SK-N-SH (cell line): ENCODE measurements at regions of chr3 and their contacts with region 1.

Region 1: GRCh38 chr3:168615493-168616020 is 519.8 kb upstream of the GOLIM4 start:
- DNase-seq: no peak
- H3K4me3 ChIP-seq: no peak overlapping the region
- H3K27ac ChIP-seq: no peak overlapping the region
- H3K4me1 ChIP-seq: no peaks in the 10 kb centered on the region
- H3K27me3 ChIP-seq: no peaks in the 10 kb centered on the region
- CTCF ChIP-seq: no peak
- EP300 ChIP-seq: no peak
- RAD21 ChIP-seq: no peak

Region 2: GRCh38 chr3:168511428-168512014 is 104.0 kb before region 1 on chr3:
- CTCF ChIA-PET with region 1: interaction called, 61 read pairs
- POLR2A ChIA-PET with region 1: no interaction called
- DNase-seq: peak; percentile 12
- H3K4me3 ChIP-seq: no peak overlapping the region
- H3K27ac ChIP-seq: no peak overlapping the region
- H3K4me1 ChIP-seq: no peaks in the 10 kb centered on the region
- H3K27me3 ChIP-seq: no peaks in the 10 kb centered on the region
- CTCF ChIP-seq: peak; percentile 62
- EP300 ChIP-seq: no peak
- RAD21 ChIP-seq: peak; percentile 76

Region 3: GRCh38 chr3:168534761-168535160 is 80.8 kb before region 1 on chr3:
- CTCF ChIA-PET with region 1: no interaction called
- POLR2A ChIA-PET with region 1: no interaction called
- DNase-seq: no peak
- H3K4me3 ChIP-seq: no peak overlapping the region
- H3K27ac ChIP-seq: no peak overlapping the region
- H3K4me1 ChIP-seq: no peaks in the 10 kb centered on the region
- H3K27me3 ChIP-seq: no peaks in the 10 kb centered on the region
- CTCF ChIP-seq: no peak
- EP300 ChIP-seq: no peak
- RAD21 ChIP-seq: no peak

Region 4: GRCh38 chr3:169323578-169324451 is 708.3 kb after region 1 on chr3:
- CTCF ChIA-PET with region 1: no interaction called
- POLR2A ChIA-PET with region 1: no interaction called
- DNase-seq: no peak
- H3K4me3 ChIP-seq: no peak overlapping the region
- H3K27ac ChIP-seq: no peak overlapping the region
- H3K4me1 ChIP-seq: no peaks in the 10 kb centered on the region
- H3K27me3 ChIP-seq: no peaks in the 10 kb centered on the region
- CTCF ChIP-seq: no peak
- EP300 ChIP-seq: no peak
- RAD21 ChIP-seq: no peak